Activated T-helper 1 cell treated with anti-CD3 and anti-CD28 coated beads, Interleukin-12 subunit alpha, Interleukin-12 subunit beta, Interleukin-2, Interleukin-4 antibody, amounts not matched to agents 30 ng/mL and 10 ng/mL and 1 ng/mL, durations not matched to agents 14 hours and 24 hours and 36 hours (primary cell): ENCODE measurements at regions of chr15 and their contacts with region 1.

Region 1: DNA sequence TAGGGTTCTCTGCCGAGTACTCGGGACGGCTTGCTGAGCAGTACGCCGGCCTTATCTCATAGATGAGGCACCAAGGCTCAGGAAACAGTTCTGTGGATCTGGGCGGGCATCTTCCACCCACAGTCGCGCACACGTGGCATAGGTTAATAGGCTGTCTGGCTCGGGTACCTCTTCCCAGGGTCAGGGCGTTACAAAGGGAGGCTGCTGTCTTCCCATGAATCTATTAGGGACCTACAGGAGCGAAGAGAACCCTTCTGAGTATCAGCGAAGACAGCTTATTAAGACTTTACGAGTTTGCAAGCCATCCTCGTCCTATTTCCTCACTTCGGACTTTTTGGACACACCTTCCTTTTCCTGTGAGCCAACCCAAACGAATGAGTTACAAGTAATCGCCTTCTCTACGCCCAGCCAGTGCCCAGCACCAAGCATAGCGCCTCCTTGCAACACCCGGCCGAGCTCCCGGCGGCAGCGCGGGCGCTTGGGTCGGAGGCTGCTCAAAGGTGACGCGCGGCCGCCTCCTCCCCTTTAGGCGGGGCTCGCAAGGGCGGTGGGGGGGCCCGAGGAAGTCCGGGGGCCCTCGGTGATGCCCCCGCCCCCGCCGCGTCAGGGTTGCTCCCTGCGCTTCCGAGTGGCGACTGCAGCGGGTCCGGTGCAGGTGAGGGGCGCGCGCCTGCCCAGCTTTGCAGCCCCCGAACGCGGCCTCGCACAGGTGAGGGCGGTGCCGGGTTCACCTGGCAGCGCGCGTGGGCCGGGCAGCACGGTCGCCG is at the start of gene MCTP2:
- DNase-seq: peak; percentile 86
- H3K4me3 Mint-ChIP-seq: peak within 1 kb of the TSS; percentile 88
- H3K27ac Mint-ChIP-seq: peak within 1 kb of the TSS; percentile 99
- H3K4me1 Mint-ChIP-seq: peaks cover 87% of the 10 kb centered on the region
- H3K27me3 Mint-ChIP-seq: no peaks in the 10 kb centered on the region
- total RNA-seq, gene MCTP2: 93.2 and 96.0 TPM in 2 replicates

Region 2: GRCh38 chr15:92903941-92904831 is 1327.0 kb before region 1 on chr15:
- intact Hi-C with region 1: loop called (anchors 5 kb)
- DNase-seq: peak; percentile 99
- H3K4me3 Mint-ChIP-seq: peak overlapping the region; percentile 93
- H3K27ac Mint-ChIP-seq: peak overlapping the region; percentile 100
- H3K4me1 Mint-ChIP-seq: peaks cover 67% of the 10 kb centered on the region
- H3K27me3 Mint-ChIP-seq: no peaks in the 10 kb centered on the region

Region 3: DNA sequence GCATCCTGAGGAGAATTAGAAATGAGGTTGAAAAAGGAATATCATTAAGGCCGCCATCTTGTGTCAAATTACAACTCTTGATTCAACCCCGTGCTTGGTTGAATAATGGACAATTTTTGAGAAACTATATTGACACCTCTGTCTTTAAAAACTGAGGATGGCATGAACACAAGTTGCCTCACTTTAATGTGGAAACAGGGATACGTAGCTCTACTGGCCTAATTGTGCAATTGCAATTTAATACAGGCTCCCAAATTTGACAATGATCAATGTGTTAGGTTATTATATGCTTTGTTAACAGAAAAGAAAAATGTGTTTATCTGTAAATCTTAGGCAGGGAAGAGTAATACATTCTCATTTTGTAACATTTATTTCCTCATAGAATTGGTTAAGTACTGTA is 76.9 kb before region 1 on chr15:
- intact Hi-C with region 1: no loop called
- DNase-seq: no peak
- H3K4me3 Mint-ChIP-seq: no peak overlapping the region
- H3K27ac Mint-ChIP-seq: no peak overlapping the region
- H3K4me1 Mint-ChIP-seq: no peaks in the 10 kb centered on the region
- H3K27me3 Mint-ChIP-seq: peaks cover 42% of the 10 kb centered on the region

Region 4: GRCh38 chr15:94174399-94174802 is 56.7 kb before region 1 on chr15:
- intact Hi-C with region 1: loop called (anchors 1 kb)
- DNase-seq: no peak
- H3K4me3 Mint-ChIP-seq: peak overlapping the region; percentile 38
- H3K27ac Mint-ChIP-seq: peak overlapping the region; percentile 85
- H3K4me1 Mint-ChIP-seq: peaks cover 58% of the 10 kb centered on the region
- H3K27me3 Mint-ChIP-seq: no peaks in the 10 kb centered on the region

Region 5: GRCh38 chr15:94253742-94254141 is 22.6 kb after region 1 on chr15:
- intact Hi-C with region 1: loop called (anchors 2 kb)
- DNase-seq: no peak
- H3K4me3 Mint-ChIP-seq: peak overlapping the region; percentile 17
- H3K27ac Mint-ChIP-seq: no peak overlapping the region
- H3K4me1 Mint-ChIP-seq: peaks cover 80% of the 10 kb centered on the region
- H3K27me3 Mint-ChIP-seq: no peaks in the 10 kb centered on the region

Region 6: GRCh38 chr15:94287794-94288246 is 56.7 kb after region 1 on chr15:
- intact Hi-C with region 1: loop called (anchors 1 kb)
- DNase-seq: peak; percentile 67
- H3K4me3 Mint-ChIP-seq: peak overlapping the region; percentile 80
- H3K27ac Mint-ChIP-seq: peak overlapping the region; percentile 91
- H3K4me1 Mint-ChIP-seq: peaks cover 75% of the 10 kb centered on the region
- H3K27me3 Mint-ChIP-seq: no peaks in the 10 kb centered on the region

Region 7: DNA sequence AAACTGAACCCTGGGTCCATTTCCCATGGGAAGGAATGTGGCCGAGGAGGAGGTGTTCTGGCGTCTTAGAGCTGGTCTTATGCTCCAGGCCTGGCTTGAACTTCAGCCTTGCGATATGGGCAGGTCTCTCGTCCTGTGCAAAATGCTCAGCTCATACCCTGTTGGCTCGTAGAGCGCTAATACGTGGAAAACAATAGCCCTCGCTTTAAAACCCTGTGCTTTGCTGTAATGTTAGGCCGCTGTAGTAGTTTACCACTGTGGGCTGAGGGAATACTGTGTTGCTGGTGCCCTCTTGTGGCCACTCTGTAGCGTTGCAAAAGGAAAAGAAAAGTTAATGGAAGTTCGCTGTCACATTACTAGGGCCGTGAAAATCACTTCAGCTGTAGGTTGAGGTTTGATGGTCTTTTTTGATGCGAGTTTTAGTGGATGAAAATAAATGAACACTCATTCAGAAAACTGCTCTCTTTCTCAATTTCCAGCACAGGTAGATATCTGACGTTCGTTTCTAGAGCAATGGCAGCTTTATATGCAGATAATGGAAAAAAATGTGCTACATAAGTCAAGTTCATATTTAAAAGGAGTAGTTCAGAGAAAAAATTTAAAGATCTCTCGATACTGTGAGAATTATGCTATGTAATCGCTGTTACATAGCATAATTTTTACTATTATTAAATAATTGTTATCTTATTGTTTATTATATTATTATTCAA is 93.1 kb after region 1 on chr15:
- intact Hi-C with region 1: loop called (anchors 1 kb)
- DNase-seq: peak; percentile 44
- H3K4me3 Mint-ChIP-seq: no peak overlapping the region
- H3K27ac Mint-ChIP-seq: no peak overlapping the region
- H3K4me1 Mint-ChIP-seq: peaks cover 48% of the 10 kb centered on the region
- H3K27me3 Mint-ChIP-seq: no peaks in the 10 kb centered on the region